Right ventricle myocardium inferior (tissue), 1 donor: ENCODE measurements at regions of chr15 and their contacts with region 1.

Region 1: GRCh38 chr15:85707519-85708338 is 87.0 kb downstream of the KLHL25 start:
- DNase-seq: no peak
- ATAC-seq: peak; percentile 51

Region 2: DNA sequence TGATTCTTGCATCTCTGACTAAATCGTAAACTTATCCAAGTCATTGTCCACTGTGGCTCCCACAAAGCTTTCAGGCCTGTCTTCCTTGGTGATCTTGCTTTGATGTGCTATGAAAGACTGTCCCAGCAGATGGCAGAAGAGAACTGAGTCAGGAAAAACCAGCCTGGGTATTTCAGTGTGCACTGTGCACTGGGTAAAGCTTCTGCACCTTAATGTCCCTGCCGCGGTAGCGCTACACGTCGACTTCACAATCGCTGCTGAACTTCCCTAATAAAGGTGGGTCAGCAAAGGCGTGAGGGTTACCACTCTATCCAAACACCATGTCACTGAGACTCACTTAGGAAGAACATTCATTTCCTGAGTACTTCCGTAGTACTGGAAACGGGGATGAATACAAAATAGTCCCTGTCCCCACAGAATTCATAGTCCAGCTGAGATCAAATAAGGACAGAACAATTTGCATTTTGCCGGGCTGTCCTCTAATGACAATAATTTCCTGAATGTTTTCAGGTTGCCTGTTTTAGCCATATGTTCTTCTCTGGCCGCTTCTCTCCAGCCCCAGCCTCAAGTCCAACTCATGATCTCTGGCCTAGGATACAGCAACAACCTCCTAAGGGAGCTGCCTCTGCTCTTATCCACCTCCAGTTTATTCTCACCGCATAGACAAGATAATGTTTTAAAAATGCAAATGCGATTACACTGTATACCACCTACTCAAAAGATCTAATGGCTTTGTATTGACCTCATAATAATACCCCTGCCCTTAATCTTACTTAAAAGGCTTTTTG is 410.9 kb before region 1 on chr15:
- intact Hi-C with region 1: loop called (anchors 10 kb)
- DNase-seq: no peak
- ATAC-seq: peak; percentile 96

Region 3: GRCh38 chr15:85618956-85619491 is 88.7 kb before region 1 on chr15:
- intact Hi-C with region 1: loop called (anchors 5 kb)
- DNase-seq: peak; percentile 84
- ATAC-seq: peak; percentile 82

Region 4: GRCh38 chr15:85667491-85668424 is 40.0 kb before region 1 on chr15:
- intact Hi-C with region 1: loop called (anchors 5 kb)
- DNase-seq: no peak
- ATAC-seq: peak; percentile 87

Region 5: GRCh38 chr15:85858586-85859375 is 151.1 kb after region 1 on chr15:
- intact Hi-C with region 1: no loop called
- DNase-seq: no peak
- ATAC-seq: peak; percentile 73